WTC11 (cell line): ENCODE measurements at regions of chr9 and their contacts with region 1.

Region 1: GRCh38 chr9:136539427-136540421 is 6.1 kb downstream of the NOTCH1 start:
- DNase-seq: peak; percentile 64
- ATAC-seq: peak; percentile 46
- H3K4me3 Mint-ChIP-seq: no peak overlapping the region
- H3K27ac Mint-ChIP-seq: peak overlapping the region; percentile 91
- H3K4me1 Mint-ChIP-seq: peaks cover 25% of the 10 kb centered on the region
- H3K27me3 Mint-ChIP-seq: no peaks in the 10 kb centered on the region
- CTCF ChIP-seq: no peak

Region 2: GRCh38 chr9:136516191-136516654 is 23.5 kb before region 1 on chr9:
- CTCF ChIA-PET with region 1: no interaction called
- POLR2A ChIA-PET with region 1: no interaction called
- DNase-seq: no peak
- ATAC-seq: no peak
- H3K4me3 Mint-ChIP-seq: no peak overlapping the region
- H3K27ac Mint-ChIP-seq: no peak overlapping the region
- H3K4me1 Mint-ChIP-seq: no peaks in the 10 kb centered on the region
- H3K27me3 Mint-ChIP-seq: no peaks in the 10 kb centered on the region
- CTCF ChIP-seq: no peak

Region 3: GRCh38 chr9:136527721-136528691 is 11.7 kb before region 1 on chr9:
- CTCF ChIA-PET with region 1: interaction called, 15 read pairs
- POLR2A ChIA-PET with region 1: no interaction called
- DNase-seq: no peak
- ATAC-seq: no peak
- H3K4me3 Mint-ChIP-seq: no peak overlapping the region
- H3K27ac Mint-ChIP-seq: peak overlapping the region; percentile 76; the same call in 1 of the 2 replicates
- H3K4me1 Mint-ChIP-seq: peaks cover 21% of the 10 kb centered on the region
- H3K27me3 Mint-ChIP-seq: no peaks in the 10 kb centered on the region
- CTCF ChIP-seq: no peak

Region 4: DNA sequence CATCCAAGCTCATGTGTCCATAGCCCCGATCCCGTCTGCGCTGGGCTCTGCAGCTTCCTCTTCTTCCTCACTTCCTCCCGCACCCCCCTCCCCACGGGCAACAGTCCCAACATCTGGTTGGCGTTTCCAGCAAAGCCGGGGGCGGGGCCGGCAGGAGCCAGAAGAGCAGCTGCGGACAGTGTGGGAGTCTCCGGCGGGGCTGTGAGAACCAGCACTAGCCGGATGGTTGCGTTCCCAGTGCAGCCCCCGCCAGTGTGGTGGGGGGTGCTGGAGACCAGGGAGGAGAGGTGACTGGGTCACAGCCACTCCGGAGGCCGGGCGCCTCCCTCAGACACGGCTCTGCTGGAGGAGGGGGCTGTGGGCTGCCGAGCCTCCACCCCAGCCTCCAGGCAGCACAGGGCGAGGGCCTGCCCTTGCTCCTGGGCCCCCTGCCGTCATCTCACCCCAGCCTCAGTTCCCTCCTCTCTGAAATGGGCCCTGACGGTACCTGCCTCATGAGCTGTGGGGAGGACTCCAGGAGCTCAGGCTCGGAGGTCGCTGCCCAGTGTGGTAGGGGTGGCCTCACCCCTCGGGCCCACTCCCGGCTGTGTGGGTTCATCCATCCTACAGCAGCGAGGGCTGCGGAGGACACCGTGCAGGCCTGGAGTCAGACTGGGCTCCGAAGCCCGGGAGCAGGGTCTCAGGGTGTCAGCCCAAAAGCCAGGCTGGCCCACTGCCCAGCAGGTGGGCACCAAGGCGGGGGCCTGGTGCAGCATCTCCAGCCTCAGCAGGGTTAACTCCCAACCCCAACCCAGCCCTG is 47.6 kb after region 1 on chr9:
- CTCF ChIA-PET with region 1: no interaction called
- POLR2A ChIA-PET with region 1: no interaction called
- DNase-seq: peak; percentile 86
- ATAC-seq: peak; percentile 58
- H3K4me3 Mint-ChIP-seq: peak overlapping the region; percentile 29
- H3K27ac Mint-ChIP-seq: no peak overlapping the region; the same call in 1 of the 2 replicates
- H3K4me1 Mint-ChIP-seq: peaks cover 39% of the 10 kb centered on the region
- H3K27me3 Mint-ChIP-seq: no peaks in the 10 kb centered on the region; the same call in 1 of the 2 replicates
- CTCF ChIP-seq: no peak